Activated naive CD4-positive, alpha-beta T cell treated with anti-CD3 and anti-CD28 coated beads for 36 hours (primary cell): ENCODE measurements at regions of chr10 and their contacts with region 1.

Region 1: GRCh38 chr10:28432210-28432676 is 100.7 kb upstream of the WAC start:
- DNase-seq: peak; percentile 29
- H3K4me3 Mint-ChIP-seq: peak overlapping the region; percentile 48
- H3K27ac Mint-ChIP-seq: no peak overlapping the region
- H3K4me1 Mint-ChIP-seq: no peaks in the 10 kb centered on the region
- H3K27me3 Mint-ChIP-seq: no peaks in the 10 kb centered on the region

Region 2: GRCh38 chr10:28365840-28366239 is 66.4 kb before region 1 on chr10:
- CTCF ChIA-PET with region 1: no interaction called
- intact Hi-C with region 1: no loop called
- DNase-seq: no peak
- H3K4me3 Mint-ChIP-seq: no peak overlapping the region
- H3K27ac Mint-ChIP-seq: peak overlapping the region; percentile 65
- H3K4me1 Mint-ChIP-seq: peaks cover 44% of the 10 kb centered on the region
- H3K27me3 Mint-ChIP-seq: no peaks in the 10 kb centered on the region

Region 3: GRCh38 chr10:28628184-28628893 is 196.1 kb after region 1 on chr10:
- CTCF ChIA-PET with region 1: no interaction called
- intact Hi-C with region 1: loop called (anchors 1 kb)
- DNase-seq: peak; percentile 83
- H3K4me3 Mint-ChIP-seq: no peak overlapping the region
- H3K27ac Mint-ChIP-seq: no peak overlapping the region
- H3K4me1 Mint-ChIP-seq: peaks cover 4% of the 10 kb centered on the region
- H3K27me3 Mint-ChIP-seq: peaks cover 10% of the 10 kb centered on the region

Region 4: GRCh38 chr10:28991326-28992270 is 559.4 kb after region 1 on chr10:
- CTCF ChIA-PET with region 1: interaction called, 3 read pairs
- intact Hi-C with region 1: loop called (anchors 5 kb)
- DNase-seq: peak; percentile 60
- H3K4me3 Mint-ChIP-seq: no peak overlapping the region
- H3K27ac Mint-ChIP-seq: no peak overlapping the region
- H3K4me1 Mint-ChIP-seq: no peaks in the 10 kb centered on the region
- H3K27me3 Mint-ChIP-seq: peaks cover 8% of the 10 kb centered on the region

Region 5: GRCh38 chr10:29304264-29305030 is 872.2 kb after region 1 on chr10:
- CTCF ChIA-PET with region 1: no interaction called
- intact Hi-C with region 1: loop called (anchors 1 kb)
- DNase-seq: peak; percentile 53
- H3K4me3 Mint-ChIP-seq: peak overlapping the region; percentile 16
- H3K27ac Mint-ChIP-seq: no peak overlapping the region
- H3K4me1 Mint-ChIP-seq: peaks cover 4% of the 10 kb centered on the region
- H3K27me3 Mint-ChIP-seq: peaks cover 33% of the 10 kb centered on the region